ENCODE measurements at regions of chr3 and their contacts with region 1.

Region 1: GRCh38 chr3:69306239-69307185 is 79.4 kb downstream of the FRMD4B start:
- DNase-seq: peak; percentile 73 to 82 (median 79)
- ATAC-seq: peak; percentile 95 to 97
- H3K4me3 ChIP-seq: no peak overlapping the region
- H3K27ac ChIP-seq: peak overlapping the region; percentile 59
- H3K4me1 ChIP-seq: no peaks in the 10 kb centered on the region
- H3K27me3 ChIP-seq: no peaks in the 10 kb centered on the region

Region 2: DNA sequence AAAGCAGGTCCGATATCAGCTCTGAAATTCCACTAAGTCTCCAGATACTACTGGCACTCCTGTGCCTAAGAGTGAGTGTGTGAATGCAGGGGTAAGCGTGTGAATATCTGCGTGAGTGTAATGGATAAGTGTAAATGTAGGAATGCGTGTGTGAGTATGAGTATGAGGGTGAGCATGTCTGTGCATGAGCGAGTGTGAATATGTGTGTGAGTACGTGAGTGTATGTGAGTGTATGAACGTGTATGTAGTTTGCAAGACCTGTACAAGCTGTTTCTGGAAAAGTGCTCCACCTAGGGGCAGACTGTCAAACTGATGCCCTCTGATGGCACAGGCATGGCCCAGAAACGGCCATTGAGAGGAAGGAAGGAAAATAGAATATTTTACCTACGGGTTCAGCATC is 103.7 kb after region 1 on chr3:
- intact Hi-C with region 1: loop called in 1 of 4 experiments (anchors 10 kb)
- DNase-seq: peak; percentile 65 to 83 (median 77)
- ATAC-seq: peak; percentile 78 to 86
- H3K4me3 ChIP-seq: no peak overlapping the region
- H3K27ac ChIP-seq: no peak overlapping the region
- H3K4me1 ChIP-seq: no peaks in the 10 kb centered on the region
- H3K27me3 ChIP-seq: no peaks in the 10 kb centered on the region

Region 3: GRCh38 chr3:69425261-69425660 is 118.7 kb after region 1 on chr3:
- intact Hi-C with region 1: loop called in 1 of 4 experiments (anchors 10 kb)
- DNase-seq: no peak
- ATAC-seq: no peak
- H3K4me3 ChIP-seq: no peak overlapping the region
- H3K27ac ChIP-seq: no peak overlapping the region
- H3K4me1 ChIP-seq: peaks cover 5% of the 10 kb centered on the region
- H3K27me3 ChIP-seq: no peaks in the 10 kb centered on the region

Region 4: GRCh38 chr3:69671082-69671952 is 364.8 kb after region 1 on chr3:
- intact Hi-C with region 1: loop called in 2 of 4 experiments (anchors 5 to 10 kb)
- DNase-seq: peak in 2 of 3 donors; percentile 38 to 55
- ATAC-seq: peak; percentile 53 to 67
- H3K4me3 ChIP-seq: no peak overlapping the region
- H3K27ac ChIP-seq: no peak overlapping the region
- H3K4me1 ChIP-seq: peaks cover 2% of the 10 kb centered on the region
- H3K27me3 ChIP-seq: no peaks in the 10 kb centered on the region